ENCODE measurements at regions of chr2 and their contacts with region 1.

Region 1: GRCh38 chr2:75676464-75676863 is 29.9 kb downstream of the MRPL19 start:
- DNase-seq: no peak
- H3K4me3 ChIP-seq: no peak overlapping the region
- H3K27me3 ChIP-seq: no peaks in the 10 kb centered on the region
- CTCF ChIP-seq: no peak

Region 2: DNA sequence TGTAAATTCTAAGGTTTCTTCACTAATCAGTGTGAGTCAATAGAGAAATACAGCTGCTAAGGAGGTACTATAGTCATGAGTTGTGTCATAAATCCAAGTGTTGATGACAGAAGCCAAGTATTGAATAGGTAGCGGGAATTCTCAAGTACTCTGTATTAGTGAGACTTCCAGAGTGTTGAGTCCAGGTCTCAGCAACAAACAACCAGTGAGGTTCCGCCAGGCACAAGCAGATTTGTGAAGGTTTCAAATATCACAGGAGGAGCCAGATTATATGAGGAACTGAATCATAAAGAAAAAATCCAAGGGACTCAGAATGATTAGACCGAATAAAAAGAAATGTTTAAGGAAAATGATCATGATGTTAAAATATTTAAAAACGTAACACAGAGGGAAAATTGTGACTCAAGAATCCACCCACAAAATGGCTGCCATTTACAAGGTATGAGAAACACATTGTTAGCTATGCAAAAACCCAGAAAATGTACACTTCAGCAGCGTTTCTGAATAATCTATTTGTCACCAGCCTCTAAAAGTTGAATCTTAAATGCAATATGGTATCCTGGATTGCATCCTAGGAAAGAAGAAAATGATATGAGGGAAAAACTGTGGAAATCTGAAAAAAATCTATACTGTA is 88.4 kb before region 1 on chr2:
- CTCF ChIA-PET with region 1: no interaction called
- POLR2A ChIA-PET with region 1: no interaction called
- DNase-seq: no peak
- H3K4me3 ChIP-seq: no peak overlapping the region
- H3K27me3 ChIP-seq: no peaks in the 10 kb centered on the region
- CTCF ChIP-seq: no peak

Region 3: DNA sequence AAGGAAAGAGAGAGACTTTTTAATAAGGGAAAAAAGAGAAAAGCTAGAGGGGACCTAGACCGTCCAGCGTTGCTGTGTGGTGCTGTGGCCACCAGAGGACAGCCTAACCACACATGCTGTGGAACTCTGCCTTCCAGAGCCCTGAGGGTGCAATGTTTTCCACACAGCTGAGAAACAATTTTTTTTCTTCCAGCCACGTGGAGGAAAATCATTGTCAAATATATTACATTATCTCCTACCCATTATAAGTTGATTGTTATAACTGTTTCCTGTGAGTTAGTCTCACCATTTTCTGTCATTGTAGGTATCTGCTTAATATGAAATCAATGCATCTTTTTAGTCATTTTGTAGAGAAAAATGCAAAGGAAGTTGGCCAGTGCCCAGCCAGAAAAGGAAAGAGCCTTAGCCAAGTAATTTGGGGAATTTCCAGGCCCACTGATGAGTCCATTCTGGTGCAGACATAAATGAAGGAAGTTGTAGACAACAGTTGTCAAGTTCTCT is 35.8 kb before region 1 on chr2:
- CTCF ChIA-PET with region 1: interaction called, 37 read pairs
- POLR2A ChIA-PET with region 1: no interaction called
- DNase-seq: peak; percentile 24
- H3K4me3 ChIP-seq: no peak overlapping the region
- H3K27me3 ChIP-seq: peaks cover 8% of the 10 kb centered on the region
- CTCF ChIP-seq: peak; percentile 100

Region 4: GRCh38 chr2:75646583-75647425 is 29.7 kb before region 1 on chr2 and contains the start of gene MRPL19:
- CTCF ChIA-PET with region 1: interaction called, 37 read pairs
- POLR2A ChIA-PET with region 1: no interaction called
- DNase-seq: peak; percentile 54
- H3K4me3 ChIP-seq: peak within 1 kb of the TSS; percentile 97
- H3K27me3 ChIP-seq: no peaks in the 10 kb centered on the region
- CTCF ChIP-seq: no peak
- polyA plus RNA-seq, gene MRPL19: 13.9 and 33.3 TPM in 2 replicates

Region 5: DNA sequence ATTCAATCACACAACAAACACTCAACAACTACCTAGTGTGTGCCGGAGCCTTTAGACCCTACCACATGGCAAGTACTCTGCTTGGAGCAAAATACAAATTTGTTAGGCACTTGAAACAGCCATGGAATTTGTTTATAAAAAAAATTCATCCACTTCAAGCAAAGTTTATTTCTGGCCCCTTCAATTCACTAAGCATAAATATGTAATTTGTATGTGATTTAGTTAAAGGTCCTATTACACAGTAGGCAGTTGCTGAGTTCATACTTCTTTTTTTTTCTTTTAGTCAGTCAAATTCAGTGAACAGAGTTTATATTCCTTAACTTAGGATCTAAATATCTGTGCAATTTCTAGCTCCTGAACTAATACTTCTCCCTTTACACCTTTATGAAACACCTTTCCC is 11.7 kb after region 1 on chr2:
- CTCF ChIA-PET with region 1: interaction called, 12 read pairs
- POLR2A ChIA-PET with region 1: no interaction called
- DNase-seq: no peak
- H3K4me3 ChIP-seq: no peak overlapping the region
- H3K27me3 ChIP-seq: no peaks in the 10 kb centered on the region
- CTCF ChIP-seq: no peak